WTC11 (cell line): ENCODE measurements at regions of chr3 and their contacts with region 1.

Region 1: GRCh38 chr3:77038468-77038929 is 1.4 kb upstream of the ROBO2 start:
- DNase-seq: peak; percentile 70
- ATAC-seq: peak; percentile 75
- H3K4me3 Mint-ChIP-seq: peak overlapping the region; percentile 87
- H3K27ac Mint-ChIP-seq: no peak overlapping the region
- H3K4me1 Mint-ChIP-seq: peaks cover 24% of the 10 kb centered on the region
- H3K27me3 Mint-ChIP-seq: peaks cover 24% of the 10 kb centered on the region
- CTCF ChIP-seq: peak; percentile 40

Region 2: DNA sequence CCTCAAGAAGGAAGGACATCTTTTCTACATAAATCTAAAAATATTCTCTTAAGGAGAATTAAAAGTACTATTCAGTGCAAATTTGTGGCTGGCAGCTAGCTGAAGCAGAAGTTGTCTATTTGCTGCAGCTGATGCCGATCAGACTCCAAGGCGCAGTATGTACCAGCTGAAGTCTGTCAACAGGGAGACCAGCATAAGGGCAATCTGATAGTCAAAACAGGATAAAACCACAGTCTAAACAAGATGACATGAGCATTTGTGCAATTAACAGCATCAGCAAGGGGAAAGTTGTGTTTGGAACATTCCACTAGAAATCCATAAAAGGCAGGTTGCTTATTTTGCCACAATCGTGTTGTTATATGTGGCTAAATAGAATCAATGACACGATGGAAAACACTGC is 196.8 kb before region 1 on chr3:
- CTCF ChIA-PET with region 1: no interaction called
- POLR2A ChIA-PET with region 1: no interaction called
- DNase-seq: no peak
- ATAC-seq: no peak
- H3K4me3 Mint-ChIP-seq: no peak overlapping the region
- H3K27ac Mint-ChIP-seq: no peak overlapping the region
- H3K4me1 Mint-ChIP-seq: peaks cover 10% of the 10 kb centered on the region; the same call in 1 of the 2 replicates
- H3K27me3 Mint-ChIP-seq: no peaks in the 10 kb centered on the region
- CTCF ChIP-seq: no peak

Region 3: GRCh38 chr3:77158730-77159581 is 120.5 kb after region 1 on chr3:
- CTCF ChIA-PET with region 1: interaction called, 11 read pairs
- POLR2A ChIA-PET with region 1: no interaction called
- DNase-seq: no peak
- ATAC-seq: peak; percentile 81
- H3K4me3 Mint-ChIP-seq: no peak overlapping the region
- H3K27ac Mint-ChIP-seq: peak overlapping the region; percentile 47; the same call in 1 of the 2 replicates
- H3K4me1 Mint-ChIP-seq: peaks cover 29% of the 10 kb centered on the region
- H3K27me3 Mint-ChIP-seq: no peaks in the 10 kb centered on the region
- CTCF ChIP-seq: no peak

Region 4: DNA sequence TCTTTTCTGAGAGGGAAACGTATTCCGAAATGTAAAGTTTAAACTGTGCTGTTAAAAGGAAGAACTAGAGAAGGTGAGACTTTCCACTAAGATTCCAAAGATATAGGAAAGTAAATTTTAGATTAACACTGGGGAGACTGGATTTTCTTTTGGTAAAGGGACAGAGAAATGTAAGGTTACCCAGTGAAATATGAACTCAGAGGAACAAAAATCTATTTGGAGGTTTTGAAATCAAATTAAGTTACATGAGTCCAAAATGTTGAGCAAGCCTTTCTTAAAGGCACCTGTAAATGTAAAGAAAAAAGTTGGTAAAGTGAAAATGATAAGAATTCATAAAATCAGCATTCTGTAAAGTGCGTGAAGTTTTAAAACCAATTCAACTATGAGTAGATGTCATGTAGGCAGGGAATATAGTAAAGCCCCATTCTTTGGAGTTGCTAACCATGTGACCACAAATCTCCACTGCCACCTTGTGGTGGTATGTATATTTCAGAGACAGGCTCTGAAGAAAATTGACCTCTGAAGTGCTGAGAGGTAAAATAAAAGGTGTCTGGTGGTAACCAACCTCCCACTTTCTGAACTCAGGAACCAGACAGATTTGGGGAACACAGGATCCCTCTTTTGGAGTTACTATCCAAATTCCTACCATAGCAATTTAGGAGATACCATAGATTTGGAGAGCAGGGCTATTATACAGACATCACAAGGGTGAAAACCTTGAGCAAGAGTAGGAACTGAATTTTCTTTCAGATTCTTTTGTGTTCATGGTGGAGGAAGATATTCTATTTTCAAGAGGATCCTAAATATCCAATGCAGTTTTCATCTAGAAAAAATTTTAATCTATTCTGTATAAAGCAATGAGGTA is 216.7 kb after region 1 on chr3:
- CTCF ChIA-PET with region 1: interaction called, 23 read pairs
- POLR2A ChIA-PET with region 1: no interaction called
- DNase-seq: peak; percentile 45
- ATAC-seq: peak; percentile 87
- H3K4me3 Mint-ChIP-seq: no peak overlapping the region
- H3K27ac Mint-ChIP-seq: no peak overlapping the region
- H3K4me1 Mint-ChIP-seq: peaks cover 20% of the 10 kb centered on the region
- H3K27me3 Mint-ChIP-seq: no peaks in the 10 kb centered on the region
- CTCF ChIP-seq: peak; percentile 77

Region 5: GRCh38 chr3:77320514-77320913 is 282.0 kb after region 1 on chr3:
- CTCF ChIA-PET with region 1: interaction called, 59 read pairs
- POLR2A ChIA-PET with region 1: interaction called, 4 read pairs
- DNase-seq: no peak
- ATAC-seq: no peak
- H3K4me3 Mint-ChIP-seq: no peak overlapping the region
- H3K27ac Mint-ChIP-seq: no peak overlapping the region
- H3K4me1 Mint-ChIP-seq: peaks cover 13% of the 10 kb centered on the region
- H3K27me3 Mint-ChIP-seq: no peaks in the 10 kb centered on the region
- CTCF ChIP-seq: peak; percentile 71